ENCODE measurements at regions of chr10 and their contacts with region 1.

Region 1: GRCh38 chr10:103712570-103713498 is 142.5 kb downstream of the SH3PXD2A start:
- DNase-seq: peak; percentile 45 to 67
- H3K4me3 ChIP-seq: no peak overlapping the region
- H3K27ac ChIP-seq: no peak overlapping the region
- H3K4me1 ChIP-seq: peaks cover 43% of the 10 kb centered on the region
- H3K27me3 ChIP-seq: no peaks in the 10 kb centered on the region
- CTCF ChIP-seq: peak; percentile 93

Region 2: DNA sequence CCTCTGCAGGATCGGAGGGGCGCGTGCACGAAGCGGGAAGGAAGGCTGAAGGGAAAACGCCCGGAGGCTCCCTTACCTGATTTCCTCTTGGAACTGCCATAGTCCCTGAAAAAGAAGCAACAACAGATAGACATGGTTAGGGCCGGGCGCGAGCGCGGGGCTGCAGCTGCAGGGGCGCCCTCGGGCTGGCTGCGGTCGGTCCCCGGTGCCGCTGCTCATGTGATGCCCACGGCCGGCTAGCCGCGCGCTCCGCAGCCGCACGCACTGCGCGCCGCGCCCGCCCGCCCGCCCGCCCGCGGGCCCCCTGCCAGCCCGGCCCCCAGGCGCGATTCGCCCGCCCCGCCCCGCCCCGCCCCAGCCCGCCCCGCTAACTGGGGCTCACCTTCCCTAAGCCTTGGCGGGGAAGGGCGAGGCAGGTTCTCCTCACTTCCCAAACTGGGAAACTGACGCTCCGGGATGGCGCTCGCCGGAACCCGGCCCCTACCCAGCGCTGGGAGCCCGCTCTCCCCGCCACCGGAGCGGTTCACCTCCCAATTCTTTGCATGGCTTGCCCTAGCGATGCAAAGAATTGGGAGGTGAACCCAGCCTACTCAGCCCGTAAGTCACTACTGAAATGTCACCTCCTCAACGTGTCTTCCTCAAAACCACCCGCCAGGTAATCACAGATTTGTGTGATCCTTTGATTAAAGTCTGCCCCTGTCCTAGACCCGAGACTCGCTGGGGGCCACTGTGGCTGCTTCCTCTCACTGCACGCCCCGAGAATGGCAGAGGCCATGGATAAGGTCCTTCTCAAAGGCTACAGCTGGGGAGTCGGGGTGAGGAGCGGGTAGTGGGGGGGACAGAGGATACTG is 19.7 kb before region 1 on chr10:
- CTCF ChIA-PET with region 1: no interaction called
- POLR2A ChIA-PET with region 1: no interaction called
- intact Hi-C with region 1: no loop called
- DNase-seq: no peak
- H3K4me3 ChIP-seq: no peak overlapping the region
- H3K27ac ChIP-seq: no peak overlapping the region
- H3K4me1 ChIP-seq: peaks cover 28% of the 10 kb centered on the region
- H3K27me3 ChIP-seq: no peaks in the 10 kb centered on the region
- CTCF ChIP-seq: no peak

Region 3: GRCh38 chr10:103745341-103746227 is 32.8 kb after region 1 on chr10:
- CTCF ChIA-PET with region 1: no interaction called
- POLR2A ChIA-PET with region 1: interaction called, 3 read pairs
- intact Hi-C with region 1: loop called (anchors 1 kb)
- DNase-seq: peak; percentile 84 to 90
- H3K4me3 ChIP-seq: no peak overlapping the region
- H3K27ac ChIP-seq: peak overlapping the region; percentile 85
- H3K4me1 ChIP-seq: peaks cover 55% of the 10 kb centered on the region
- H3K27me3 ChIP-seq: no peaks in the 10 kb centered on the region
- CTCF ChIP-seq: no peak; the same call in 1 of the 2 replicates

Region 4: GRCh38 chr10:103781329-103782061 is 68.7 kb after region 1 on chr10:
- CTCF ChIA-PET with region 1: interaction called, 5 read pairs
- POLR2A ChIA-PET with region 1: interaction called, 3 read pairs
- intact Hi-C with region 1: loop called (anchors 10 kb)
- DNase-seq: peak; percentile 49 to 92
- H3K4me3 ChIP-seq: no peak overlapping the region
- H3K27ac ChIP-seq: peak overlapping the region; percentile 79
- H3K4me1 ChIP-seq: peaks cover 41% of the 10 kb centered on the region
- H3K27me3 ChIP-seq: no peaks in the 10 kb centered on the region
- CTCF ChIP-seq: peak; percentile 59; the same call in 1 of the 2 replicates

Region 5: GRCh38 chr10:103859161-103860086 is 146.6 kb after region 1 on chr10:
- CTCF ChIA-PET with region 1: no interaction called
- POLR2A ChIA-PET with region 1: no interaction called
- intact Hi-C with region 1: loop called (anchors 1 kb)
- DNase-seq: peak in 1 of 2 experiments; percentile 50
- H3K4me3 ChIP-seq: no peak overlapping the region
- H3K27ac ChIP-seq: no peak overlapping the region
- H3K4me1 ChIP-seq: peaks cover 2% of the 10 kb centered on the region; the same call in 1 of the 2 replicates
- H3K27me3 ChIP-seq: no peaks in the 10 kb centered on the region
- CTCF ChIP-seq: peak; percentile 75

Region 6: DNA sequence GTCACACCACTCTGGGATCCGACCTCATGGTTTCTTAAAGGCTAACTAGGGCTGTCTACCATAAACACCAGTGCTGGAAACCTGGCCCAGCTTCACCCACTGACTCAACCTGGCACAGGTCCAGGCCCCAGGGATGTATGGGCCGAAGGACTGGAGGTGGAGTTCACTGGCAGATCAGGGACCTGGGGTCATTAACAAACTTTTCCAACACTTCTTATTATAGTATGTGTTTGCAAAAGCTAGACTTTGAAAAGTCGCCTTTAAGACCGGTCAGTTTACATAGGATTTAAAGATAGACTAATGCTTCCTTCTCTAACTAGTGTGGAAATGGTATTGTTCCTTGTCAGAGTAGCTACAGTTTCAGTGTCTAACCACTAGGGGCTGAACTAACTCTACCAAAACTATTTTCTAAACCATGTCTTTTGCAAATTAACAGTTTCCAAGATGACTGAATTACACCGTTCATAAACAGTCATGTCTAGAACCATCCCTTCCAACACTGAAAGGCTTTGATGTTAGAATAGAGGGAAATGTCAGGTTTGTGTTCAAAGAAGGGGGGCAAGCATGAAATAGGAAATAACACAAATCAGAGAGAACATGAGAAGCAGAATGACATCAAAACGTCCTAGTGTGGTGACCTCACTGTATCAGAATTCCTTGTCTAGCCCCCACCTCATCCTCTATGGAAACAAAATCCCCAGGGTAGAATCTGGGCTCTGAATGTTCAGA is 175.4 kb after region 1 on chr10:
- CTCF ChIA-PET with region 1: interaction called, 3 read pairs
- POLR2A ChIA-PET with region 1: no interaction called
- intact Hi-C with region 1: loop called (anchors 1 kb)
- DNase-seq: peak in 1 of 2 experiments; percentile 54
- H3K4me3 ChIP-seq: no peak overlapping the region
- H3K27ac ChIP-seq: peak overlapping the region; percentile 99
- H3K4me1 ChIP-seq: peaks cover 55% of the 10 kb centered on the region
- H3K27me3 ChIP-seq: no peaks in the 10 kb centered on the region
- CTCF ChIP-seq: peak; percentile 82

Region 7: DNA sequence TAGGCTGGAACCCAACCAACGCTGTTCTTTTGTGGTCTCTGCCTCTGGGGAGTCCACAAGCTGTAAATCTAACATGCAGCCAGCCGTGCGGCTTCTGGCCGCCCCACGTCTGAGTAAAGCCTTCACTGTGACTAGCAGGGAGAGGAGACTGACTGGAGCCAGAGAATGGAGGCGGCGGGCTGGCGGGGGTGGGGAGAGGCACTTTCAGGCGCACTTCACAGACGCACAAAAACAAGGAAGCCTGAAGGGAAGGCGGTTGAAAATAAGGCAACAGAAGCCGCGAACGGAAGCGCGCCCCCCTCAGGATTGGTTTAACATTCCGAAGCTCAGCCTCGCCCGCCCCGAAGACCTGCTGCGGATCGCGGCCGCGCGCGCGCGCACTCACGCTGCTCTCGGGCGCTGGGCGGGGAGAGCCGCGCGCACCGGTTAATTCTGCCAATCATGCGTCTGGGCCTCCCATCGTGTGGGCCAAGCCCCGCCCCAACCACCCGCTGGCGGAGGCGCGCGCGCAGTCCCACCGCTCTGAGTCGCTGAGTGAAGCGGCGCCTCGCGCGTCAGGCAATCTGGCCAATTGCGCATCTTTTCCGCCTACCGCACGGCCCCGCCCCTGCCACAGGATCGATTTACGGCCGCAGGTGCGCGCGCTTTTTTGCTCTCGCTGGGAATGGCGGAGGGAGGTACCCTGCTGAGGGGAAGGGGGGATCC is 408.8 kb after region 1 on chr10 and contains the start of gene SFR1:
- CTCF ChIA-PET with region 1: interaction called, 3 read pairs
- POLR2A ChIA-PET with region 1: no interaction called
- intact Hi-C with region 1: loop called (anchors 10 kb)
- DNase-seq: peak; percentile 90 to 97
- H3K4me3 ChIP-seq: peak within 1 kb of the TSS; percentile 85
- H3K27ac ChIP-seq: peak within 1 kb of the TSS; percentile 97
- H3K4me1 ChIP-seq: peaks cover 45% of the 10 kb centered on the region
- H3K27me3 ChIP-seq: no peaks in the 10 kb centered on the region
- CTCF ChIP-seq: peak; percentile 57
- total RNA-seq, gene SFR1: 4.3 TPM in 2 replicates